Activated CD4-positive, alpha-beta T cell treated with anti-CD3 and anti-CD28 coated beads, Interleukin-2, amount 10 ng/mL, durations not matched to agents 7 days and 5 days (primary cell): ENCODE measurements at regions of chr4 and their contacts with region 1.

Region 1: GRCh38 chr4:26028793-26029567 is 115.0 kb downstream of the SMIM20 start:
- DNase-seq: peak; percentile 62
- H3K4me3 Mint-ChIP-seq: no peak overlapping the region
- H3K27ac Mint-ChIP-seq: no peak overlapping the region
- H3K4me1 Mint-ChIP-seq: peaks cover 11% of the 10 kb centered on the region
- H3K27me3 Mint-ChIP-seq: peaks cover under 1% of the 10 kb centered on the region

Region 2: DNA sequence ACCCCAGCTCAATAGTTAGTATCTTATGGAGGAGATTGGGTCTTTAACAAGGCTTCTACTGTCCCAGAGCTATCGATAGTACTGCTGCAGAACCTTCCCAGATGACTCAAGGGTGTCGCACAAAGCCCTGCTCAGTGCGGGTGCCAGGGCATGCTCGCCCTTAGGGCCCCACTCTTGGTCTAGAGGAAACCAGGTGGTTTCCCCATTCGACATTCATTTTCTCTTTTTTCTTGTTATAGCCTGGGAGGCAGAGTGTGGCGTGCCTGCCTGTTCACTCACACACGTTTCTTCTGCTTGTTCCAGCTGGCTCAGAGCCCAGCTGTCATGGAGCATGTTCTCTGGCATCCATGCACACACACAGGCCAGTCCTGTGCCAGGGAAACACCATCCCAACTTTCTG is 29.6 kb after region 1 on chr4:
- CTCF ChIA-PET with region 1: interaction called, 10 read pairs
- POLR2A ChIA-PET with region 1: no interaction called
- DNase-seq: no peak
- H3K4me3 Mint-ChIP-seq: no peak overlapping the region
- H3K27ac Mint-ChIP-seq: no peak overlapping the region
- H3K4me1 Mint-ChIP-seq: peaks cover 10% of the 10 kb centered on the region
- H3K27me3 Mint-ChIP-seq: no peaks in the 10 kb centered on the region

Region 3: DNA sequence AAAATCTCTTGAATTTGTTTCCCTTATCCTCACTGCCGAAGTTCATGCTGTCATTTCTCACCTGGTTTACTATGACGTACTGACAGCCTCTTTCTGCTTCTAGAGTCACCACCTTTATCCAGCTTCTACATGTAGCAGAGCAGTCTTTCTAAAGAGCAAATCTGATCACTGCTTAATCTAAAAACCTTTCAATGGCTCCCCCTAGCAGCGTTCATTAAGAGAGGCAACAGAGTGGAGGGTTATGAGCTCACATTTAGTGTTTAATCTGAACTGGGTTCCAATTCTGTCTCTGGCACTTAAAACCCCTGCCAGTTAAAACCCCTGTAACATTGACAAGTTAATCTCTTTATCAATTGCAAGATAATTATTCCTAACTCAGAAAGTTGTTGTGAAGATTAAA is 296.2 kb after region 1 on chr4:
- CTCF ChIA-PET with region 1: interaction called, 11 read pairs
- POLR2A ChIA-PET with region 1: no interaction called
- DNase-seq: peak; percentile 58
- H3K4me3 Mint-ChIP-seq: no peak overlapping the region
- H3K27ac Mint-ChIP-seq: no peak overlapping the region
- H3K4me1 Mint-ChIP-seq: peaks cover 35% of the 10 kb centered on the region
- H3K27me3 Mint-ChIP-seq: no peaks in the 10 kb centered on the region